ENCODE measurements at regions of chr12 and their contacts with region 1.

Region 1: GRCh38 chr12:32302218-32303173 is 96.9 kb upstream of the FGD4 start:
- DNase-seq: no peak
- H3K4me3 ChIP-seq: no peak overlapping the region
- H3K27ac ChIP-seq: no peak overlapping the region
- H3K4me1 ChIP-seq: no peaks in the 10 kb centered on the region
- H3K27me3 ChIP-seq: no peaks in the 10 kb centered on the region
- CTCF ChIP-seq: peak in 1 of 3 experiments; percentile 7
- POLR2A ChIP-seq: no peak

Region 2: DNA sequence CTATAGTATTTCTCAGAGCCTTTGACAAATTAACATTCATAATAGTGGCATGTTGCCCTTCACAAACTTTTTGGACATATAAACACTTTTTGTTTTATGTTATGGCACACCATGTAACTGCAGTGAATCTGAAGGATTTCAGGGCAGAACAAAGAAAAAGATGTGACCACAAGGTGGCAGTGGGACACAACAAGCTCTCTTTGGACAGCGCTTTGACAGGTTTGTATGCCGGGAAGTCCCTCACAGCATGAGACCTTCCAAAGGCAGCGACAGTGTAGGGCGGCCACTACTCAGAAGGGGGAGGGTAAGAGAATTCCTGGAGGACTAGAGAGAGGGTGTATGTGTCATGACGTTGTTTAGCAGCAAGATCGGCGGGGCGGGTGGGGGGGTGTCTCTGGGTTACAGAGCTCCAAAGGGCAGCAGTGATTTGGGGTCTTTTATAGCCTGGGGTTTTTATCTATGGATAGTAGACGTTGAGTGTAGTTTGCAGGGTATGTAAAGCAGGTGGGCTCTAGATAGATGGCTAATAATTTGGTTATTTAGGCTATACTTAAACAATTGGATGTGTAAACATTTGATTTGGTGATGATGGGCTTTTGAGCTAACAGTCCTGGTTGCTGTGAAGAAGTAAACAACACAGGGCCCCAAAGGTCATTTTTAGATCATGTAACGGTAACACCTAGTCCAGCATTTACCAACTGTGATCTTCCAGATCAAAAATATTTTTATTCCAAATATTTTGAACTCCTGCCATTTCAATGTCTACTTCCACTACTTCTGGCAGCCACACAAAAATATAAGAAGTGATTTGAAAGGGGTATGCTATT is 620.1 kb before region 1 on chr12:
- intact Hi-C with region 1: loop called (anchors 10 kb)
- DNase-seq: no peak
- H3K4me3 ChIP-seq: no peak overlapping the region
- H3K27ac ChIP-seq: no peak overlapping the region
- H3K4me1 ChIP-seq: no peaks in the 10 kb centered on the region
- H3K27me3 ChIP-seq: no peaks in the 10 kb centered on the region
- CTCF ChIP-seq: peak in 2 of 3 experiments; percentile 46 to 53
- POLR2A ChIP-seq: no peak

Region 3: GRCh38 chr12:32061033-32061432 is 241.5 kb before region 1 on chr12:
- intact Hi-C with region 1: loop called (anchors 2 kb)
- DNase-seq: no peak
- H3K4me3 ChIP-seq: no peak overlapping the region
- H3K27ac ChIP-seq: no peak overlapping the region
- H3K4me1 ChIP-seq: no peaks in the 10 kb centered on the region
- H3K27me3 ChIP-seq: no peaks in the 10 kb centered on the region
- CTCF ChIP-seq: no peak
- POLR2A ChIP-seq: no peak